Sigmoid colon (tissue), 7 donors: ENCODE measurements at regions of chr11 and their contacts with region 1.

Region 1: DNA sequence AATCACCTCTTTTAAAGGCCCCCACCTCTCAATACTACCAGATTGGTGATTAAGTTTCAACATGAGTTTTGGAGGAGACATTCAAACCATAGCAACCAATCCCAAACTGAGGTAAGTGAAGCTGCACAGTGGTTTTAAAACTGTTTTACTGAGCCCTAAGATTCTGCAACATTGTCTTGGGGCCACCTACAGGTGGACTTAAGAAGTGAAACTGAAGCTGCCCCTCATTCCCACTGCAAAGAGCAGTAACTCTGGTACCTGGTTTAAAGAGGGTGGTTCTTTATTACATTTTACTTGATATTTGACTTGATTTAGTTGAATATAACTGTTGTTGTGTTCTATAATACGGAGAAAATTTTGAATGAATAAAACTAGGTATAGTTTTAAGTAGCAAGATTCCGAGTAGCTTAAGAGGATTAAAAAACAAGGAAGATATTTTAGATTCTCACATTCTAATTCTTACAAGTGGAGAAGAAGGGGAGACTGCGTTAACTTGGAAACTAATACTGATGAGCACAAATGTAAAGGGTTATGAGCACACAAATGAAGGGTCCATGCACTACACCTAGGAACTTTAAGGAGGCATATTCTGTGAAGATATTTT is 26.7 kb downstream of the SYT9 start:
- DNase-seq: no peak
- H3K4me3 ChIP-seq: no peak overlapping the region
- H3K27ac ChIP-seq: no peak overlapping the region
- H3K4me1 ChIP-seq: peaks cover 0 to 6% (median 0%) of the 10 kb centered on the region in 4 donors
- H3K27me3 ChIP-seq: no peaks in the 10 kb centered on the region
- CTCF ChIP-seq: peak in 2 of 4 experiments; percentile 43 to 46
- EP300 ChIP-seq: no peak
- POLR2A ChIP-seq: no peak

Region 2: GRCh38 chr11:7143908-7144307 is 134.5 kb before region 1 on chr11:
- intact Hi-C with region 1: loop called (anchors 10 kb)
- DNase-seq: no peak
- H3K4me3 ChIP-seq: no peak overlapping the region
- H3K27ac ChIP-seq: no peak overlapping the region
- H3K4me1 ChIP-seq: no peaks in the 10 kb centered on the region
- H3K27me3 ChIP-seq: no peaks in the 10 kb centered on the region
- CTCF ChIP-seq: peak in 2 of 4 experiments; percentile 27 to 46
- EP300 ChIP-seq: no peak
- POLR2A ChIP-seq: no peak

Region 3: GRCh38 chr11:7251836-7252682 is 26.4 kb before region 1 on chr11 and contains the start of gene SYT9:
- intact Hi-C with region 1: no loop called
- DNase-seq: peak; percentile 62
- H3K4me3 ChIP-seq: peak within 1 kb of the TSS; percentile 25 to 61 (median 48)
- H3K27ac ChIP-seq: no peak within 1 kb of the TSS
- H3K4me1 ChIP-seq: peaks cover 0 to 17% (median 14%) of the 10 kb centered on the region in 4 donors
- H3K27me3 ChIP-seq: peaks cover 0 to 27% (median 16%) of the 10 kb centered on the region in 3 donors
- CTCF ChIP-seq: no peak
- EP300 ChIP-seq: no peak
- POLR2A ChIP-seq: no peak
- total RNA-seq, gene SYT9: 0.16 to 1.1 (median 0.34) TPM

Region 4: DNA sequence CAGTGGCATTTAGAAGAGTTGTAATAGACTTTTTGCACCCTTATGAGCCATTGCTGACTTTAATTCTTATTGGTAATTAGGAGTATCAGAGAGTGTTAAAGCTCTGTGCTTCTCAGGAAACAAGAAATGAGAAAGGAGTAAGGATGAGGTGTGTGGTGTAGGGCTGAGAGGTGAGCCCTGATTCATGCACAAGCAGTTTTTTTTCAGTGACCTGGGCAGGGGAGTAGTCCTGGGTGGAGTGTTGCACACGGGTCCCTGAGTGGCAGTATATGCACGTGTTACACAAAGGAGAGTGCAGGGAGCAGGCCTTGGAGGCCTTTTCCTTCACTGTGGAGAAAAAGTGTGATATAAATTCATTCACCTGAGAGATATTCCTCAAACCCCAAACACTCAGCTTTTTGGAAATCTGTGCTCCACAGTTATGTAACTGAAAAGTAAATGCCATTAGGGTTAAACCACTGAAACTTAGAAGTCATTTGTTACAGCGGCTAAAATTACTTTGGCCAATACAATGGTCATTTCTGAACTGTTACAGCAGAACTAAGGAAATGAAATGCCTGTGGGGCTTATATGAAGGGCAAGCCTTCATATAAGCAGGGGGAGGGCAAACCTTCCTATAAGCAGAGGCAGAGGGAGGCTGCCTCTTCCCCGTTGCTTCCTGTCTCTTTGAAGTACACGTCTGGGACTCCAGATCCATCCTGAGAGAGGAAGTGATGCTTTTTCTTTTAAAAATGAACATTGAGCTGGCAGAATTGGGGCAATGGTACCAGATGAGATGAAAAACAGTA is 144.3 kb after region 1 on chr11:
- intact Hi-C with region 1: no loop called
- DNase-seq: no peak
- H3K4me3 ChIP-seq: no peak overlapping the region
- H3K27ac ChIP-seq: no peak overlapping the region
- H3K4me1 ChIP-seq: no peaks in the 10 kb centered on the region
- H3K27me3 ChIP-seq: no peaks in the 10 kb centered on the region
- CTCF ChIP-seq: no peak
- EP300 ChIP-seq: no peak
- POLR2A ChIP-seq: no peak